Cardiac septum (tissue), 1 donor: ENCODE measurements at regions of chr22 and their contacts with region 1.

Region 1: GRCh38 chr22:31977141-31977841 is 33.0 kb downstream of the YWHAH start:
- DNase-seq: no peak

Region 2: GRCh38 chr22:31911565-31912406 is 65.5 kb before region 1 on chr22:
- intact Hi-C with region 1: no loop called
- DNase-seq: no peak

Region 3: DNA sequence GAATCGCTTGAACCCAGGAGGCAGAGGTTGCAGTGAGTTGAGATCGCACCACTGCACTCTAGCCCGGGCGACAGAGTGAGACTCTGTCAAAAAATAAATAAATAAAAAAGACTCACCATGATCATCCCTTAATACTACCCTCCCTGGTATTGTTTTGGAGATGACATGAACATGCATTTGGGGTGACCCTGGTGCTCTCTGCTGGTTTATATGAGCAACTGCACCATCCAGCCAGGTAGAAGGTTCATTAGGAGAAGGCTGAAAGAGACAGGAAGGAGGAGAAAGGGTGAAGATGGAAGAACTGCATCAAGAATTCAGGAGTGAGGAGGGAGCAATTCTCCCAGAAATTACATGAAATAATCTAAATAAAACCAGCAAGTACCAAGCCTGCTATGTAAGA is 103.6 kb after region 1 on chr22:
- intact Hi-C with region 1: loop called (anchors 1 kb)
- DNase-seq: no peak

Region 4: DNA sequence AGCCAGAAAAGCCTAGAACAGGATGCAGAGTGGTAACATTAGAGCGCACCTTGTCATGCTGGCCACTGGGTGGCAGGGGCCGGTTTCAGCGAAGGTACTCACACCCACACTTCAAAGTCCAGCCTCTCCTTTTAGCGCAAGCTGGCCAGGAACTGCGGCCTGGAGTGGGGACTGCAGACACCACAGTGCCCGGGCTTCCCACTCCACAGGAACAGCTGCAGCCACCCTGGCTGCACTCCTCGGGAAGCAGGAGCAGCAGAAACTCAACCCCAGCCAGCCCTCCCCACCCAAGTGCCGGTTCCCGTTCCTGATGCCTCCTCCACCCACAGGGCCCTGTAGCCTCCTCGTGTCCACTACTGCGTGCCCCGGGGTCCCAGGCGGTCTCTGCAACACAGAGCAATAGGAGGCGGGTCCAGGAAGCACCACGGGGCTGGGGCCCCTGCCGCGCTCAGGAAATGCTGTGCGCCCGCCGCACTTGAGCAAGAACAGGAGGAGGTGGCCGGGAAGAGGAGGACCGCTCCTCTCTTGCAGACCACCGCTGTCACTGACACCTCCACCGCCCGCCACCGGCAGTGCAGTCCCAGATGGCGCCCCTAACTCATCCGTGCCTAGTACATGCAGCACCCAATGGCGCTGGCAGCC is 225.4 kb after region 1 on chr22:
- intact Hi-C with region 1: loop called (anchors 5 kb)
- DNase-seq: no peak